ENCODE measurements at regions of chr3 and their contacts with region 1.

Region 1: GRCh38 chr3:40321818-40322217 is 12.3 kb downstream of the EIF1B start:
- DNase-seq: no peak
- H3K4me3 ChIP-seq: no peak overlapping the region
- H3K27ac ChIP-seq: no peak overlapping the region
- H3K4me1 ChIP-seq: no peaks in the 10 kb centered on the region
- H3K27me3 ChIP-seq: no peaks in the 10 kb centered on the region
- CTCF ChIP-seq: no peak
- POLR2A ChIP-seq: no peak

Region 2: GRCh38 chr3:40398346-40398745 is 76.5 kb after region 1 on chr3:
- intact Hi-C with region 1: no loop called
- DNase-seq: no peak
- H3K4me3 ChIP-seq: no peak overlapping the region
- H3K27ac ChIP-seq: no peak overlapping the region
- H3K4me1 ChIP-seq: no peaks in the 10 kb centered on the region
- H3K27me3 ChIP-seq: no peaks in the 10 kb centered on the region
- CTCF ChIP-seq: no peak
- POLR2A ChIP-seq: no peak

Region 3: DNA sequence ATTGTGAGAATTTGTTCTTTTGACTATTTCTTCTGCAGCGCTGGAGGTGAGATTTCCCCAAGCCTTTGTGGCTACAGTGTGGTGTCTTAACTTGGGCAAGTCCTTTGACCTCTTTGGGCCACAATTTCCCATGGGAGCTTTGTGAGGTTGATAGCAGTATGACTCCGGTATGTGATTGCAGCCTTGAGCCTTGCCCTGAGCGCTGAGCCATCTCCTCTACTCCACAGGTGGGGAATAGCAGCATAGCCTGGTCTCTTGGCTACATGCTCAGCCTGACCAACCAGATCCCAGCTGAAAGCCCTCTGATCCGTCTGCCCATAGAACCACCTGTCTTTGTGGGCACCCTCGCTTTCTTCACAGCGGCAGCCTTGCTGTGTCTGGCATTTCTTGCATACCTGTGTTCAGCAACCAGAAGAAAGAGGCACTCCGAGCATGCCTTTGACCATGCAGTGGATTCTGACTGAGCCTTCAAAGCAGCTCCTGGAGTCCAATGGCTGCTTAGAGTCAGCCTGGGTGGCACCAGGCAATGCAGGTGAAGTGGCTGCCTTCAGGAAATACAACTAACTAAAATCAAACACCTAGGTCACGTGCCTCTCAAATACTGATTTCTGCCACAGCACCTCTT is 105.3 kb after region 1 on chr3:
- intact Hi-C with region 1: loop called (anchors 10 kb)
- DNase-seq: no peak
- H3K4me3 ChIP-seq: no peak overlapping the region
- H3K27ac ChIP-seq: no peak overlapping the region
- H3K4me1 ChIP-seq: no peaks in the 10 kb centered on the region
- H3K27me3 ChIP-seq: no peaks in the 10 kb centered on the region
- CTCF ChIP-seq: no peak
- POLR2A ChIP-seq: no peak